ENCODE measurements at regions of chr5 and their contacts with region 1.

Region 1: DNA sequence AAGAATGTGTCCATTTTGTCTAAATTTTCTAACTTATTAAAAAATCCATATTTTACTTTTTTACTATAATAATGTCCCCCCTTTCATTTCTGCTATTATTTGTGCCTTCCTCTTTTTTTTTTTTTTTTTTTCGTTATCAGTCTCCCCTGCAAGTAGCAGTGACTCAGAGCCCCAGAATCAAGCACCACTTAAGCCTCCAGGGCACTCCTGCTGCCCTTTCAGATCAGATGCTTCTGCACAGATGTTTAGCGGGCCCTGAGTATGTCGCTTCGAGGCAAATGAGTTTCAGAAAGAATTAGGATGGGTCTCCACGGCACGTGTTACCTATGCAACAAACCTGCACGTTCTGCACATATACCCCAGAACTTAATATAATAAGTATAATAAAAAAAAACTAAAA is 11.7 kb downstream of the MED7 start:
- DNase-seq: no peak
- ATAC-seq: no peak
- H3K4me3 ChIP-seq: no peak overlapping the region
- H3K27ac ChIP-seq: no peak overlapping the region
- H3K4me1 ChIP-seq: no peaks in the 10 kb centered on the region
- H3K27me3 ChIP-seq: no peaks in the 10 kb centered on the region
- CTCF ChIP-seq: no peak

Region 2: DNA sequence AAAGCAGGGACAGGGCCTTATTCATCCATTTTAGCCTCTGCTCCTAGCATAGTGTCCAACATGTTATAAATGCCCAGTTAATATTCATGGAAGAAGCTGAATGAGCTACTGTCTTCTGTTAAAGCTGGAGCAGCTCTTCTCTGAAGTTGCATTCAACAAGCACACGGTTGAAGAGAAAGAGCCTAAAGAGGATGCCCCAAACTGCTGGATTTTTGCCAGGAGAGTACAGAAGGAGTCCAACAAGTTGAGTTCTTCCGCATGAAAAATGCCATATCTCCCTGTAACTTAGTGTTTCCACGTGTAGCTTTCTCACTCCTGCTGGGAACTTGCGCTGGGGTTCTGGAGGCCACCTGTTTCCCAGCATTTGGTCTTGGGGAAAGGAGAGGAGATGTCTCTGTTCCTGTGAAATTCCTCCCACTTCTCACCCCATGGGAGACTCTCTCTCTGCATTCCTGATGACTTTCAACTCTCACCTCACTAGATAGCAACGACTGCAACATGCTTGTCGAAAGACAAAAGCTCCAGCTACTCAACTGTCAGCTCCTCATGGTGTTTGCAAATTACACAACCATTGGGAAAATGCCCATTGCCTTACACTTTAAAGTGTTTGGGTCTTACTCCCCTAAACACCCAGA is 1994.6 kb before region 1 on chr5:
- CTCF ChIA-PET with region 1: interaction called, 3 read pairs
- POLR2A ChIA-PET with region 1: no interaction called
- intact Hi-C with region 1: loop called (anchors 1 kb)
- DNase-seq: no peak
- ATAC-seq: no peak
- H3K4me3 ChIP-seq: no peak overlapping the region
- H3K27ac ChIP-seq: no peak overlapping the region
- H3K4me1 ChIP-seq: no peaks in the 10 kb centered on the region
- H3K27me3 ChIP-seq: no peaks in the 10 kb centered on the region
- CTCF ChIP-seq: no peak

Region 3: DNA sequence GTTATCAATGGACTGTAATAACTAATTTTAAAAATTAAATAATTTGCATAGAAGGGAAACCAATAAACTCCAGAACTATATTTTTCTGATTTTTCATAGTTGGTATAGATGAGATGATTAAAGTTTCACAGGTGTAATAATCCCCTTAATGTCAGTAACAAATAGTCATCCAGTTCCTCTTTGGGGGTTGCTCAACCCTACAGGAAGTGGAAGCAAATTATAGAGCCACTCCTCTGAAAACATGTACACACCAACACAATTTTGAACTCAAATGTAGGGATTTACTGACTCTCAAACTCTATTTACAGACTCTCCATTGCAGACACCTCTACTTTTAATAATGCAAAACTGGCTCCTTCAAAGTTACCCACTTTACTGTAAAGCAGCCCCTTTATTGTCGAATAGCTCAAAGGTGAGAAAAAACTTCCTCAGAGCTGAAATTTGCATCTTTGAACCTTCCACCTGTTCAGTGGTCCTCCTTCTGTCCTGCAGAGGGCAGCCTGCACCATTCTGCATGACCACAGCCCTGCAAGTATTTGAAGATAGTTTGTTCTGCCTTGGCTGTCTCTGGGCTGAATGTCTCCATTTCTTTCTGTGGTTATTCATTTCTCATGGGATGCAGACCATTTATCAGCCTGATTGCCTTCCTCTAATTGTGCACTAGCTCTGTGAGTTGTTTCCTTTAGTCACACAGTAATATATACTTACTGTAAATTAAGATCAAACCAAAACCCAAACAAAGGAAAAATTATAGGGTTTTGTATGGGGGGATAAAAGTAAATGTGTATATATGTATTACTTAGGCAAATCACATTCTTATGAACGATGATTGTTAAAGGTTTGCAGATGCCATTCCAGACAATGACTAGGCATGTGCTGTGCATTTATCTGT is 1187.2 kb before region 1 on chr5:
- CTCF ChIA-PET with region 1: no interaction called
- POLR2A ChIA-PET with region 1: no interaction called
- intact Hi-C with region 1: loop called (anchors 5 kb)
- DNase-seq: peak; percentile 2
- ATAC-seq: no peak
- H3K4me3 ChIP-seq: no peak overlapping the region
- H3K27ac ChIP-seq: no peak overlapping the region
- H3K4me1 ChIP-seq: no peaks in the 10 kb centered on the region
- H3K27me3 ChIP-seq: no peaks in the 10 kb centered on the region
- CTCF ChIP-seq: peak; percentile 44

Region 4: DNA sequence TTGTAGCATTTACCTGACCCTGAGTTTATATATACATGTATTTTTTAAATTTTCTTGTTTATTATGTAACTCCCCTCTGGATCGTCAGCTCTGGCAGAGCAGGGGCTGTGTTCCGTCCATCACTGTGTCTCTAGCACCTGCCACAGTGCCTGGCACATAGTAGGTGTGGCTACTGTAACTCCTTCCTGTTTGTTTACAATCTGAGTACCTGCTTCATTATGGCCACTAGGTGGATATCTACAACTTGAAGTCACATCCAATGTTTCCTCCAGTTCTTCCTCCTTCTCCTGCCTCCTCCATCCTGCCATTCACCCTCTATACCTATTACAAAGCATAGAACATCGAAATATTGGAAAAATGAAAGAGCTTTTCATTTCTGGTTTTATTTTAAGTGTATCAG is 295.0 kb before region 1 on chr5:
- CTCF ChIA-PET with region 1: no interaction called
- POLR2A ChIA-PET with region 1: interaction called, 3 read pairs
- intact Hi-C with region 1: loop called (anchors 1 kb)
- DNase-seq: peak; percentile 50
- ATAC-seq: peak; percentile 43; the same call in 1 of the 2 replicates
- H3K4me3 ChIP-seq: no peak overlapping the region
- H3K27ac ChIP-seq: no peak overlapping the region
- H3K4me1 ChIP-seq: no peaks in the 10 kb centered on the region
- H3K27me3 ChIP-seq: peaks cover 24% of the 10 kb centered on the region
- CTCF ChIP-seq: peak; percentile 60

Region 5: GRCh38 chr5:157142317-157143126 is 11.6 kb after region 1 on chr5 and contains the start of gene MED7:
- CTCF ChIA-PET with region 1: interaction called, 15 read pairs
- POLR2A ChIA-PET with region 1: interaction called, 6 read pairs
- intact Hi-C with region 1: no loop called
- DNase-seq: peak; percentile 100
- ATAC-seq: peak; percentile 99
- H3K4me3 ChIP-seq: peak within 1 kb of the TSS; percentile 79
- H3K27ac ChIP-seq: peak within 1 kb of the TSS; percentile 16
- H3K4me1 ChIP-seq: peaks cover 10% of the 10 kb centered on the region; the same call in 1 of the 2 replicates
- H3K27me3 ChIP-seq: no peaks in the 10 kb centered on the region
- CTCF ChIP-seq: no peak
- total RNA-seq, gene MED7: 10.6 and 14.8 TPM in 2 replicates

Region 6: GRCh38 chr5:157159209-157159751 is 28.4 kb after region 1 on chr5:
- CTCF ChIA-PET with region 1: no interaction called
- POLR2A ChIA-PET with region 1: no interaction called
- intact Hi-C with region 1: no loop called
- DNase-seq: peak; percentile 35
- ATAC-seq: no peak
- H3K4me3 ChIP-seq: no peak overlapping the region
- H3K27ac ChIP-seq: no peak overlapping the region
- H3K4me1 ChIP-seq: no peaks in the 10 kb centered on the region
- H3K27me3 ChIP-seq: peaks cover 95% of the 10 kb centered on the region
- CTCF ChIP-seq: no peak

Region 7: GRCh38 chr5:157335534-157336422 is 204.9 kb after region 1 on chr5:
- CTCF ChIA-PET with region 1: no interaction called
- POLR2A ChIA-PET with region 1: no interaction called
- intact Hi-C with region 1: no loop called
- DNase-seq: peak; percentile 53
- ATAC-seq: peak; percentile 82
- H3K4me3 ChIP-seq: no peak overlapping the region
- H3K27ac ChIP-seq: no peak overlapping the region
- H3K4me1 ChIP-seq: peaks cover 11% of the 10 kb centered on the region
- H3K27me3 ChIP-seq: no peaks in the 10 kb centered on the region
- CTCF ChIP-seq: no peak